ENCODE measurements at regions of chr14 and their contacts with region 1.

Region 1: GRCh38 chr14:77053046-77053841 is 24.7 kb upstream of the IRF2BPL start:
- DNase-seq: peak; percentile 73
- H3K4me3 ChIP-seq: no peak overlapping the region
- H3K27ac ChIP-seq: peak overlapping the region; percentile 64 to 77 (median 68)
- H3K4me1 ChIP-seq: peaks cover 12 to 27% (median 16%) of the 10 kb centered on the region in 4 donors
- H3K27me3 ChIP-seq: no peaks in the 10 kb centered on the region
- CTCF ChIP-seq: peak; percentile 88 to 98 (median 91)
- EP300 ChIP-seq: no peak
- POLR2A ChIP-seq: no peak

Region 2: DNA sequence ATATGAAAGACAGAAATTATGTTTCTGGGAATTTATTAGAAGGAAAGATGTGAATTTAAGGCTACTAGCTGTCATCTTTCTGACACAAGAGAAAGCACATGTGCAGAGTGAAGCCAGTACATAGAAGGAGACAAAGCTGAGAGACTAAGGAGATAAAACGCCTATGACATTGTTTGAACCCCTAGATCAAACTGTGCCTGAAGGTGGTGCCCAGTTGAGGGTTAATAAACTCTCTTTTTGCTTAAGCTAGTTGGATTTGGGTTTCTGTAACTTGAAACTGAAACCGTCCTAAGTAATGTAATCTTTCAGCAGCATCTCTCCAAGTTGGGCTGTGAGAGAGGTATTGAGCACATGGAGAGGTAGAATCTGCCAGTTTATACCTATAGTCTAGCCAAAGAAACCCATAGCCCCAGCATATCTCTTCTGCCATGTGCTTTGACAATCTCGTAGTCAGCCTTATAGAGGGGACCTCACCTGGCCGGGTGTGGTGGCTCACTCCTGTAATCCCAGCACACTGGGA is 142.8 kb before region 1 on chr14:
- in situ Hi-C with region 1: loop called in 2 of 4 experiments (anchors 10 kb)
- intact Hi-C with region 1: loop called (anchors 5 kb)
- DNase-seq: no peak
- H3K4me3 ChIP-seq: no peak overlapping the region
- H3K27ac ChIP-seq: no peak overlapping the region
- H3K4me1 ChIP-seq: peaks cover 8 to 28% (median 16%) of the 10 kb centered on the region in 4 donors
- H3K27me3 ChIP-seq: no peaks in the 10 kb centered on the region
- CTCF ChIP-seq: no peak
- EP300 ChIP-seq: no peak
- POLR2A ChIP-seq: no peak

Measured in transverse colon (tissue), 4 donors.